ENCODE measurements at regions of chr11 and their contacts with region 1.

Region 1: GRCh38 chr11:8813658-8814057 is 97.3 kb upstream of the AKIP1 start:
- DNase-seq: peak; percentile 67 to 83 (median 79)
- H3K4me3 ChIP-seq: no peak overlapping the region
- H3K27ac ChIP-seq: peak overlapping the region in 1 of 2 donors; percentile 14
- H3K4me1 ChIP-seq: peaks cover 13% of the 10 kb centered on the region
- H3K27me3 ChIP-seq: no peaks in the 10 kb centered on the region
- CTCF ChIP-seq: peak; percentile 40 to 74 (median 60)
- EP300 ChIP-seq: no peak
- POLR2A ChIP-seq: no peak

Region 2: GRCh38 chr11:8392166-8392565 is 421.5 kb before region 1 on chr11:
- intact Hi-C with region 1: loop called in 1 of 4 experiments (anchors 5 kb)
- DNase-seq: no peak
- H3K4me3 ChIP-seq: no peak overlapping the region
- H3K27ac ChIP-seq: no peak overlapping the region
- H3K4me1 ChIP-seq: peaks cover 14% of the 10 kb centered on the region
- H3K27me3 ChIP-seq: no peaks in the 10 kb centered on the region
- CTCF ChIP-seq: no peak
- EP300 ChIP-seq: no peak
- POLR2A ChIP-seq: no peak

Region 3: GRCh38 chr11:8682303-8683114 is 131.1 kb before region 1 on chr11 and contains the starts of genes RPL27A and TRIM66:
- intact Hi-C with region 1: loop called in 2 of 4 experiments (anchors 5 kb)
- DNase-seq: peak; percentile 99 to 100 (median 100)
- H3K4me3 ChIP-seq: peak within 1 kb of the TSS; percentile 97
- H3K27ac ChIP-seq: peak within 1 kb of the TSS; percentile 69 to 91
- H3K4me1 ChIP-seq: peaks cover 8% of the 10 kb centered on the region
- H3K27me3 ChIP-seq: no peaks in the 10 kb centered on the region
- CTCF ChIP-seq: peak; percentile 7 to 59 (median 52)
- EP300 ChIP-seq: peak; percentile 40
- POLR2A ChIP-seq: peak; percentile 100
- total RNA-seq, gene RPL27A: 986 to 2,251 (median 1,304) TPM
- total RNA-seq, gene TRIM66: 2.3 to 15.4 (median 4.9) TPM

Region 4: DNA sequence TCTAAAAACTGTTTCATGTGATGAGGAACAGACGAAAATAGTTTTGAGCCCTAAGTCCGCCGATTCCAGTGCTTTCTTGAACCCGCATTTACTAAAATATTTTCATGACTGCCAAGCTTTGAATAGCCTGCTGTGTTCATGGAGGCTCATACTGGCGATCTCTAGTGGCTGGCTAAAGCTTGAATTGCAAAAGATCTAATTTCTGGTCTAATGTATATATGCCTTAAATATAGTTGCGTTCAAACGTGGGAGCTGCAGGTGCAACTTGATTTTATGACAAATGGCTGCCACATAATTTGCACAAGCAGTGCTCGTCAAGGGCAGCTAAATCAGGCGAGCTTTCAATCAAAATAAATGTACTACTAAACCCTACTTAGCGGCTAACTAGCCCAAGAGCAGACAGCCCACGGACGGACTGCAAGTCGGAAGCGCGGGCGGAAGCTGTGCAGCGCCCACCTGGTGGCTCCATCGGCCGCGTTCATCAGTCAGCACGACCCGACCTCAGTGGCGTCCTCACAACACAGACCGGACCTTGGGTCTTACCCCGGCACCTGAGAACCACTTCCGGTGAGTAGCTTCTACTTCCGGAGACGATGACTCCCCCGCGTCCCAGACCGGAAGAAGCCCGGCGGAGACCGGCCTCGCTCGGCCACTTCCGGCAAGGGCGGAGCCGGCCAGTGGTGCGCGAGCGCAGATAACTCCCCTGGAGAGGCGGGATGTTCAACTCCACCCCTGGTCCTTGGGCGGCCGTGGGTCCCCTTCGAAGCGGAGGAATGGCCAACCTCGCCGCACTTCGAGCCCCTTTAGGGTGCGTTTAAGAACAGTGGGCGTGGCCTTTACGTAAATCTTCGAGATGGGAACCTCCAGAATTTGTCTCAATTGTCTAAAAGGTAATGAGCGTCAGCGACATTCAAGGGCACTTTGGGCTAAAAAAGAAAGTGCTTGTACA is 125.0 kb before region 1 on chr11:
- intact Hi-C with region 1: loop called in 2 of 4 experiments (anchors 5 kb)
- DNase-seq: peak; percentile 94 to 97 (median 94)
- H3K4me3 ChIP-seq: peak overlapping the region; percentile 40
- H3K27ac ChIP-seq: peak overlapping the region in 1 of 2 donors; percentile 20
- H3K4me1 ChIP-seq: peaks cover 7% of the 10 kb centered on the region
- H3K27me3 ChIP-seq: no peaks in the 10 kb centered on the region
- CTCF ChIP-seq: peak in 1 of 3 donors; percentile 27
- EP300 ChIP-seq: no peak
- POLR2A ChIP-seq: no peak

Region 5: GRCh38 chr11:8870411-8871170 is 56.9 kb after region 1 on chr11:
- intact Hi-C with region 1: loop called in 1 of 4 experiments (anchors 5 kb)
- DNase-seq: peak; percentile 66 to 79 (median 70)
- H3K4me3 ChIP-seq: peak overlapping the region; percentile 91
- H3K27ac ChIP-seq: peak overlapping the region; percentile 84 to 92
- H3K4me1 ChIP-seq: peaks cover 8% of the 10 kb centered on the region
- H3K27me3 ChIP-seq: no peaks in the 10 kb centered on the region
- CTCF ChIP-seq: no peak
- EP300 ChIP-seq: no peak
- POLR2A ChIP-seq: no peak

Region 6: GRCh38 chr11:8983552-8983951 is 169.9 kb after region 1 on chr11:
- intact Hi-C with region 1: no loop called
- DNase-seq: no peak
- H3K4me3 ChIP-seq: no peak overlapping the region
- H3K27ac ChIP-seq: no peak overlapping the region
- H3K4me1 ChIP-seq: no peaks in the 10 kb centered on the region
- H3K27me3 ChIP-seq: no peaks in the 10 kb centered on the region
- CTCF ChIP-seq: no peak
- EP300 ChIP-seq: no peak
- POLR2A ChIP-seq: no peak